PC-9 (cell line): ENCODE measurements at regions of chr1 and their contacts with region 1.

Region 1: GRCh38 chr1:22416555-22417454 is 34.8 kb upstream of the ZBTB40 start:
- DNase-seq: peak; percentile 51 to 80
- H3K4me3 ChIP-seq: no peak overlapping the region
- H3K27ac ChIP-seq: no peak overlapping the region
- H3K4me1 ChIP-seq: peaks cover 29% of the 10 kb centered on the region
- H3K27me3 ChIP-seq: no peaks in the 10 kb centered on the region
- CTCF ChIP-seq: peak; percentile 92

Region 2: GRCh38 chr1:21261551-21262281 is 1155.1 kb before region 1 on chr1:
- CTCF ChIA-PET with region 1: no interaction called
- POLR2A ChIA-PET with region 1: no interaction called
- intact Hi-C with region 1: loop called (anchors 10 kb)
- DNase-seq: peak; percentile 77 to 82
- H3K4me3 ChIP-seq: no peak overlapping the region
- H3K27ac ChIP-seq: peak overlapping the region; percentile 96
- H3K4me1 ChIP-seq: peaks cover 26% of the 10 kb centered on the region
- H3K27me3 ChIP-seq: no peaks in the 10 kb centered on the region
- CTCF ChIP-seq: no peak

Region 3: DNA sequence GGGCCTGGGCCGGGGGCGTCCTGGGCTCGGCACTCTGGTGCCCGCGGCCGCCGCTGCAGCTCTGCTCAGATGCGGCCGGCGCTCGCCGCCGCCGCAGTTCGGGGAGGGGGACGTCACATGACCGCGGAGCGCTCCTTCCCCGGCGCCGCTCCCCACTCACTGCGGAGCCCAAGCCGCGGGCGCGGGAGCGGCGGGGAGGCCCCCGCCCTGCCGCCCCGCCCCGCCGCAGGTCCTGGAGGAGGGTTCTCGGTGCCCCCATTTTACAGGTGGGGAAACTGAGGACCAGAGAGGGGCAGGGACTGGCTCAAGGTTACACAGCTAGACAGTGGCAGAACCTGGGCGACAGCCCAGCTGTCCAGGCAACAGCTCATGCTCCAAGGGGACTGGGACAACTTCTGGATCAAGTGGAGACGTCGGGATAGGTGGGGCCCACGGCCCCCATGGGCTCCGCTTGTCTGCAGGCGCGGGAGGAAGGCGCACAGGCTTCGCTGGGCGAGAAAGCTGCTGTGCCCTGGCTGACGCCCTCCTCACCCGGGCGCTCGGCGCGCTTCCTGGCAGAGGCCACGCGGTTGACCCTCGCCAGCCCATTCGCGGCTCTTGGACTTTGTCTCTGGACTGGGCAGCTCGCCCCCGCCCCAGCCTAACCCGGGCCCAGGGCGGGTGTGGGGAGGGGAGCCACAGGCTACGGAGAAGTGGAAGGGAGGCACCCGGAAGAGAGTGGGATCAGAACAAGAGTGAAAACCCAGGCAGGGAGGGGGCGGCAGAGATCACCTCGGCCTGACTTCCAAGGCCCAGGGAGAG is 747.3 kb before region 1 on chr1 and contains the start of gene RAP1GAP:
- CTCF ChIA-PET with region 1: no interaction called
- POLR2A ChIA-PET with region 1: no interaction called
- intact Hi-C with region 1: loop called (anchors 10 kb)
- DNase-seq: no peak
- H3K4me3 ChIP-seq: no peak within 1 kb of the TSS
- H3K27ac ChIP-seq: no peak within 1 kb of the TSS
- H3K4me1 ChIP-seq: no peaks in the 10 kb centered on the region
- H3K27me3 ChIP-seq: no peaks in the 10 kb centered on the region
- CTCF ChIP-seq: no peak
- total RNA-seq, gene RAP1GAP: 22.7 and 30.2 TPM in 2 replicates

Region 4: GRCh38 chr1:22105611-22106207 is 311.1 kb before region 1 on chr1:
- CTCF ChIA-PET with region 1: interaction called, 13 read pairs
- POLR2A ChIA-PET with region 1: no interaction called
- intact Hi-C with region 1: loop called (anchors 1 kb)
- DNase-seq: peak in 1 of 2 experiments; percentile 21
- H3K4me3 ChIP-seq: no peak overlapping the region
- H3K27ac ChIP-seq: no peak overlapping the region
- H3K4me1 ChIP-seq: no peaks in the 10 kb centered on the region
- H3K27me3 ChIP-seq: no peaks in the 10 kb centered on the region
- CTCF ChIP-seq: peak; percentile 88

Region 5: DNA sequence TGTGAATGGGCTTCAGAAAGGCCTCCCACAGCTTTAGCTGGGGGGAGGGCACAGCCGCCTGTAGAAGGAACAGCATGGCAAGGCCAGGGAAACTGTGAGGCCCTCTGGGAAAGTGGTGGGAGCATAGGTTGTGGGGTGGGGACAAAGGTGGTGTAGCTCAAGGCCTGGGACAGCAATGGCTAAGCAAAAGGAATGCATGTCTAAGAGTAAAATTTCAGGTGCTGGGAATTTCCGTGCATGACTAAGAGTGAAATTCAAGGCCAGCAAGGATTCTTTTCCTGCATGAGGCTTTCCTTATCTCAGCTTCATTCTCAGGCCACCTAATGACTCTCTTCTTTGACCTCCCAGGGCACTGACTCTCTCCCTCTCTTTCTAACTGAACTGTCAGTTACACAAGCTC is 187.4 kb before region 1 on chr1:
- CTCF ChIA-PET with region 1: no interaction called
- POLR2A ChIA-PET with region 1: interaction called, 5 read pairs
- intact Hi-C with region 1: loop called (anchors 1 kb)
- DNase-seq: peak; percentile 47 to 94
- H3K4me3 ChIP-seq: no peak overlapping the region
- H3K27ac ChIP-seq: peak overlapping the region; percentile 99
- H3K4me1 ChIP-seq: peaks cover 34% of the 10 kb centered on the region
- H3K27me3 ChIP-seq: no peaks in the 10 kb centered on the region
- CTCF ChIP-seq: no peak

Region 6: DNA sequence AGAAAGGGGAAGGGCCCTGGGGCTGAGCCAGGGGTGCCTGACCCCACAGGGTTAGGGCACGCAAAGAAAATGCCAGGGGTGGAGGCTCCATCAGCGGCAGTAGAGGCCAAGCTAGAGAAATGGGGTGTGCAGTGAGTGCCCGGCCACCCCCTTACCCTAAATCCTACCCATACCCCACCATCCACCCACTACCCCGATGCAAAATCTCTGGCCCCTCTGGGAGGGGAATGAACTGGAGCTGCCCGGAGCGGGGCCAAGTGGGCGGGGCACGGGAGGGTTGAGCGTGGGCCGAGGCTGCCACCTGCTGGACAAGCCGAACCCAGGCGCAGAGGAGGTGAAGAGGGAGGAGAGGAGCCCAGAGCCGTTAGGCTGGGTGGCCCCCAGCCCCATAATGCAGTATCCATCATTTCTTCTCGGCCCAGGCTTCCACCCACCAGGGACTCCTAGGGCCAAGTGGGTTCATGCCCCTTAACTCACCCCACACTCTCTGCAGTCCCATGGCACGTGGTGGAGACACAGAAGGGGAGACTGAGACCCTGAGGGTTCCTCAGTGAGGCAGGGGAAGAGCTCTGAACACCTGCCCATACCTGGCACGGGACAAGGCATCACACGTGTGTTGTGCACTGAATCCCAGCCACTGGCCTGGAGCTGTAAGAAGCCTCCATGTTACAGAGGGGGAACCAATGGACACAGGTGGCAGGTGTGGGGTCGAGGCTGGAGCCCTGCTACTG is 225.3 kb after region 1 on chr1:
- CTCF ChIA-PET with region 1: interaction called, 5 read pairs
- POLR2A ChIA-PET with region 1: no interaction called
- intact Hi-C with region 1: loop called (anchors 1 kb)
- DNase-seq: peak in 1 of 2 experiments; percentile 73
- H3K4me3 ChIP-seq: no peak overlapping the region
- H3K27ac ChIP-seq: no peak overlapping the region
- H3K4me1 ChIP-seq: peaks cover 13% of the 10 kb centered on the region
- H3K27me3 ChIP-seq: 0 out of 2 replicates have a peak, but pooled peaks cover under 1% of the 10 kb centered on the region
- CTCF ChIP-seq: peak; percentile 85

Region 7: DNA sequence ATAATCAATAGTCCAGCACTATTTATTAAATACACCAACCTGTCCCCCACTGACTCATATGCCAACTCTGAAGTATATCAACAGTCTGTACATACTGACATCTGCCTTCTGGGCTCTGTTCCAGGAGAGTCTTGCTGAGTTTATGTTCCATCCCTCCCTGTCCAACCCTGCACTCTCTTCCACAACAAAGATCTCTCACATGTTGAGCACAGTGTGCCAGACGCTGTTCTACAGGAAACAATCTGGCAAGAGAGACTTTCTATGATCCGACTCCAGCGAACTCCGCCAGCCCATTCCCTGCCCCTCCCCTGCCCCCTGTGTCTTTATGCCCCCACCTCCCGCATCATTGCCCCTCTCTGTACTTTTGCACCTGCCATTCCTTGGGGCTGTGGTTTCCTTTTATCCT is 552.5 kb after region 1 on chr1:
- CTCF ChIA-PET with region 1: no interaction called
- POLR2A ChIA-PET with region 1: no interaction called
- intact Hi-C with region 1: loop called (anchors 1 kb)
- DNase-seq: no peak
- H3K4me3 ChIP-seq: no peak overlapping the region
- H3K27ac ChIP-seq: no peak overlapping the region
- H3K4me1 ChIP-seq: peaks cover 18% of the 10 kb centered on the region
- H3K27me3 ChIP-seq: no peaks in the 10 kb centered on the region
- CTCF ChIP-seq: no peak